Uterus (tissue), 4 donors: ENCODE measurements at regions of chr17 and their contacts with region 1.

Region 1: DNA sequence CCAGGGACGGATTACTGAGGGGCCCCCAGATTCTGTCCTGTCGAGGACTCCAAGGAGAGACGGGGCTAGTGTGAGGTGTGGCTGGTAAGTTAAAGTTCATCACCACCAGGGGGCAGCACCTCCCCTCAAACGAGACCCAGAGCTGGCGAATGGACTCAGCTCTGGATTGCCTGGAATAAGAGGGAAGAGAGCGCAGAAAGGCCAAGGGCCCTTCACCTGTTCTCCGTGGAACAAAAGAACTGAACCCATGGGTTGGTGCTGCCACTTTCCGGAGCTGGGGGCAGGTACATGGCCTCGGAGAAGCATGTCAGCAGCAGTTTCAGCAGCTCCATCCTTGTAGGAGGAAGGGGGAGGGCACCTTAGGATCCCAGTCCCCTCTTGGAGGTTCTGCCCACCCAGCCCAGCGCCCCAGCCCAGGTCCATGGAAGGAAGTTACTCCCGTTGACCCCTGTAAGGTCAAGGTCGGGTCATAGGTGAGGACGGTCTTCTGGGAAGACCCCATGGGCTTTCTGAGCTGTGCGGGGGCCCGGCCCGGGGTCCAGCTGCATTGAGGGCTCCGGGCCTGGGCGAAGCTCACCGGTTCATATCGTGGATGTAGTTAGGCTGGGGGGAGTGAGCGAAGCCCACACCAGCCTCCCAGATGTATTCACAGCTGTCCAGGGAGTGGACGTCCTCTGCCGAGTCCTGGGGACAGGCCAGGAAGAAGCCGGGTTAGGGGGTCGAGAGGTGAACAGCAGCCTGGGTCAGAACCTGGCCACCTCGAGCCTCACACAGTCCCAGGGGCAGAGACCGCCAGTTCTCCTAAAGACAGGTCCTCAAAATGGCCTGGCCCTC is 10.7 kb downstream of the HID1 start:
- DNase-seq: peak; percentile 88 to 91
- H3K4me3 ChIP-seq: no peak overlapping the region
- H3K27ac ChIP-seq: no peak overlapping the region
- H3K4me1 ChIP-seq: no peaks in the 10 kb centered on the region
- H3K27me3 ChIP-seq: no peaks in the 10 kb centered on the region
- CTCF ChIP-seq: peak; percentile 68 to 87 (median 78)
- POLR2A ChIP-seq: no peak

Region 2: GRCh38 chr17:74748529-74749365 is 213.1 kb before region 1 on chr17 and contains the start of gene NHERF1:
- intact Hi-C with region 1: loop called (anchors 10 kb)
- DNase-seq: peak; percentile 85 to 88
- H3K4me3 ChIP-seq: peak within 1 kb of the TSS; percentile 62 to 92
- H3K27ac ChIP-seq: peak within 1 kb of the TSS; percentile 30 to 78
- H3K4me1 ChIP-seq: no peaks in the 10 kb centered on the region
- H3K27me3 ChIP-seq: no peaks in the 10 kb centered on the region
- CTCF ChIP-seq: peak in 1 of 4 experiments; percentile 6
- POLR2A ChIP-seq: peak; percentile 95
- total RNA-seq, gene NHERF1: 3.3 to 16.9 (median 12.0) TPM

Region 3: GRCh38 chr17:75012346-75013091 is 50.6 kb after region 1 on chr17 and contains the start of gene MRPL58:
- intact Hi-C with region 1: loop called (anchors 10 kb)
- DNase-seq: peak; percentile 76 to 85
- H3K4me3 ChIP-seq: peak within 1 kb of the TSS; percentile 50 to 72
- H3K27ac ChIP-seq: peak within 1 kb of the TSS; percentile 90 to 94
- H3K4me1 ChIP-seq: peaks cover 0 to 11% of the 10 kb centered on the region in 2 donors
- H3K27me3 ChIP-seq: no peaks in the 10 kb centered on the region
- CTCF ChIP-seq: peak; percentile 35 to 79 (median 63)
- POLR2A ChIP-seq: peak in 1 of 2 donors; percentile 45
- total RNA-seq, gene MRPL58: 18.2 to 26.4 (median 20.8) TPM

Region 4: GRCh38 chr17:75205037-75205792 is 243.3 kb after region 1 on chr17 and contains the start of gene NUP85:
- intact Hi-C with region 1: loop called (anchors 10 kb)
- DNase-seq: peak; percentile 92 to 94
- H3K4me3 ChIP-seq: peak within 1 kb of the TSS; percentile 71 to 98
- H3K27ac ChIP-seq: peak within 1 kb of the TSS; percentile 90 to 98
- H3K4me1 ChIP-seq: no peaks in the 10 kb centered on the region
- H3K27me3 ChIP-seq: no peaks in the 10 kb centered on the region
- CTCF ChIP-seq: peak in 2 of 4 experiments; percentile 20 to 41
- POLR2A ChIP-seq: peak; percentile 37 to 74
- total RNA-seq, gene NUP85: 17.1 to 108 (median 39.1) TPM